GM12878 (cell line): ENCODE measurements at regions of chr1 and their contacts with region 1.

Region 1: GRCh38 chr1:6401673-6402072 is 8.1 kb upstream of the ACOT7 start:
- DNase-seq: no peak
- ATAC-seq: no peak
- H3K4me3 ChIP-seq: no peak overlapping the region
- H3K27ac ChIP-seq: no peak overlapping the region
- H3K4me1 ChIP-seq: no peaks in the 10 kb centered on the region
- H3K27me3 ChIP-seq: no peaks in the 10 kb centered on the region
- CTCF ChIP-seq: no peak
- EP300 ChIP-seq: no peak
- POLR2A ChIP-seq: no peak
- RAD21 ChIP-seq: no peak

Region 2: DNA sequence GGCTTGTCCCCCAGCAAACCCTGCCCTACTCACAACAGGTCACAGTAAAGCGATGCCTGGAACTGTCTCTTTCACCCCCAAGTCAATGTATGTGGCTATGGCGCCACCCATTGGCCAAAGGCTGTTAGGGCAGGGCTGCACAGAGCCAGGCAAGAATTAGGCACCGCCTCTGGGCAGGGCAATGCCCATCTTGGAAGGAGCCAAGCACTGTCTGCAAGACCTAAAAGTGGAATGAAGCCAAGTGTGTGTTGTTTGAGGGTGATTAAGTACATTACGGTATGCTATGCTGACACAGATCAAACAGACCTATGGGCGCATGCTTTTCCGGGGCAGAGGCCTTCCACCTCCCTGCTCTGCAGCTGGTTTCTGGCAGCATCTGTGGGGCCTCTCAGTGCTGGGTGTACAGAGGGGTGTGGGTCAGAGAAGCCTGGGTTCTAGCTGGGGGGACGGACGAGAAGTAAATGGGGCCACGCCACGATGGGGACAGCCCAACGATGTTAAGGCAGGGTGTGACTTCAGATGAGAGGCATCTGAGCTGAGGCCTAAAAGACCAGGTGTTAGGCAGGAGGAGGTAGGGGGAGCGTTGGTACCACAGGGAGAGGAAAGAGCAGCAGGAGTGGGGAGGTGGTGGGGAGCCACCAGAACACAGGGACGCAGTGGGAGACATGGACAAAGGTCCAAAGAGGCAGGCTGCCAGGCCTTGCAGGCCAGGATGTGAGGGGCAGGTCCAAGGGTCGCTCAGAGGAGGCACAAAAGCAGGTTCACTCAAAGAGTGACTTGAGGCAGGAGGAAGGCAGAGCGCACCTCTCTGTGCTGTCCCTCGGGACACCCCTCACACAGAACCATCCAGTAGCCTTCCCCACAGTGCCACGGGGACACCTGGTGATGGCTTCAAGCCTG is 57.9 kb before region 1 on chr1:
- CTCF ChIA-PET with region 1: interaction called, 56 read pairs
- POLR2A ChIA-PET with region 1: no interaction called
- RAD21 ChIA-PET with region 1: interaction called, 12 read pairs
- SMC1A ChIA-PET with region 1: interaction called, 12 read pairs
- in situ Hi-C with region 1: loop called (anchors 5 kb)
- intact Hi-C with region 1: loop called (anchors 1 kb)
- DNase-seq: no peak
- ATAC-seq: peak; percentile 94
- H3K4me3 ChIP-seq: no peak overlapping the region
- H3K27ac ChIP-seq: no peak overlapping the region
- H3K4me1 ChIP-seq: peaks cover 6% of the 10 kb centered on the region; the same call in 1 of the 2 replicates
- H3K27me3 ChIP-seq: no peaks in the 10 kb centered on the region
- CTCF ChIP-seq: peak; percentile 85 to 99 (median 87); a peak in 5 of 6 replicates
- EP300 ChIP-seq: no peak
- POLR2A ChIP-seq: no peak
- RAD21 ChIP-seq: peak; percentile 97

Region 3: GRCh38 chr1:6414443-6414844 is 12.8 kb after region 1 on chr1:
- CTCF ChIA-PET with region 1: interaction called, 10 read pairs
- POLR2A ChIA-PET with region 1: no interaction called
- RAD21 ChIA-PET with region 1: no interaction called
- SMC1A ChIA-PET with region 1: no interaction called
- in situ Hi-C with region 1: no loop called
- intact Hi-C with region 1: no loop called
- DNase-seq: peak; percentile 39
- ATAC-seq: peak; percentile 97
- H3K4me3 ChIP-seq: no peak overlapping the region
- H3K27ac ChIP-seq: peak overlapping the region; percentile 21; the same call in 1 of the 2 replicates
- H3K4me1 ChIP-seq: peaks cover 13% of the 10 kb centered on the region
- H3K27me3 ChIP-seq: peaks cover 4 to 7% of the 10 kb centered on the region in 2 experiments; a peak in 3 of 4 replicates
- CTCF ChIP-seq: peak; percentile 58 to 68 (median 68)
- EP300 ChIP-seq: 0 out of 4 replicates have a peak, but pooled peaks of 1 of the 2 experiments have one; percentile 36
- POLR2A ChIP-seq: no peak; the same call in 1 of the 2 replicates
- RAD21 ChIP-seq: no peak

Region 4: GRCh38 chr1:6423321-6423999 is 21.8 kb after region 1 on chr1:
- CTCF ChIA-PET with region 1: interaction called, 10 read pairs
- POLR2A ChIA-PET with region 1: interaction called, 9 read pairs
- RAD21 ChIA-PET with region 1: no interaction called
- SMC1A ChIA-PET with region 1: no interaction called
- in situ Hi-C with region 1: no loop called
- intact Hi-C with region 1: no loop called
- DNase-seq: no peak
- ATAC-seq: peak; percentile 75
- H3K4me3 ChIP-seq: no peak overlapping the region
- H3K27ac ChIP-seq: no peak overlapping the region
- H3K4me1 ChIP-seq: peaks cover 10% of the 10 kb centered on the region
- H3K27me3 ChIP-seq: peaks cover 18 to 22% of the 10 kb centered on the region in 2 experiments; a peak in 3 of 4 replicates
- CTCF ChIP-seq: peak; percentile 80 to 91 (median 85)
- EP300 ChIP-seq: no peak
- POLR2A ChIP-seq: no peak
- RAD21 ChIP-seq: peak; percentile 52